ENCODE measurements at regions of chr12 and their contacts with region 1.

Region 1: DNA sequence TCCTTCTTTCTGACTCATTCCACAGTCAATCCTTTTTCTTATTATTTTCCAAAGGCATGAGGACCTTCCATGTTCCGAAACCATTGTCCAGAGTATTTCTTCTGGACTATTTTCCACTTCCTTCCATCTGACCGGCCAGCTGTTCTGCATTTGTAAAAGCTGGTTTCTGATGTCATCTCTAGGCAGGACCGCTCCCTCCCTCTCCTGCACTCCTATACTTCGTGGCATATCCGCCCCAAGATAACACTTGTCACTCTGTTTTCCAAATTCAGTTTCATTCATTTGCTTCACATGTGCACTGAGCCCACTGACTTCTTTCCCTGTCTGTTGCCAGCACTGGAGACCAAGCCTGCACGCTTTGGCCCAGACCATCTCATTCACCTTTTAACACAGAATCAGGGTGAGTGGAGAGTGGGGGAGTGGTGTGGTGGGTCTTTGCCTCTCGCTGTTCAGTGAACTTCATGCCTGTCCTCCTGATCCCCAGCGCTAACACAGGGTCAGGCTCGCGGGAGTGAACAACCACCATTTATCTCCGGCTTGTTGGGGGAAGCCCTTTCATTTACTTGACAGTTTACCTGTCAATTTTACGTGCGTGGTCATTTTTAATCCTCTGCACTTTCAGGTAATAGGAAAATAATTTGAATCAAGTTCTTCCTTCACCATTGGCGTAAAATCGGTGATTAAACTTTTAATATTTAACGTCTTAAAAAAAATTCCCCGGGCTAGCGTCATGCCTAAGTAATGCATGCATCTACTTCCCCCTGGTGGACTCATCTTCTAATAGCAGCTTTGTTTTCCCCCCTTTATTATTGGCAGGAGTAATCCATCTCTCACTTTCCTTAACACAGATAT is 52.5 kb downstream of the C12orf75 start:
- DNase-seq: no peak
- H3K4me3 ChIP-seq: peak overlapping the region; percentile 7 to 46 (median 16)
- H3K27ac ChIP-seq: no peak overlapping the region
- H3K4me1 ChIP-seq: no peaks in the 10 kb centered on the region
- H3K27me3 ChIP-seq: no peaks in the 10 kb centered on the region
- CTCF ChIP-seq: peak; percentile 56 to 91 (median 89)
- POLR2A ChIP-seq: no peak

Region 2: GRCh38 chr12:104381731-104382480 is 1001.1 kb before region 1 on chr12:
- intact Hi-C with region 1: loop called (anchors 10 kb)
- DNase-seq: peak; percentile 55 to 78
- H3K4me3 ChIP-seq: peak overlapping the region in 1 of 3 donors; percentile 23
- H3K27ac ChIP-seq: no peak overlapping the region
- H3K4me1 ChIP-seq: no peaks in the 10 kb centered on the region
- H3K27me3 ChIP-seq: no peaks in the 10 kb centered on the region
- CTCF ChIP-seq: peak; percentile 85 to 96 (median 90)
- POLR2A ChIP-seq: no peak

Region 3: DNA sequence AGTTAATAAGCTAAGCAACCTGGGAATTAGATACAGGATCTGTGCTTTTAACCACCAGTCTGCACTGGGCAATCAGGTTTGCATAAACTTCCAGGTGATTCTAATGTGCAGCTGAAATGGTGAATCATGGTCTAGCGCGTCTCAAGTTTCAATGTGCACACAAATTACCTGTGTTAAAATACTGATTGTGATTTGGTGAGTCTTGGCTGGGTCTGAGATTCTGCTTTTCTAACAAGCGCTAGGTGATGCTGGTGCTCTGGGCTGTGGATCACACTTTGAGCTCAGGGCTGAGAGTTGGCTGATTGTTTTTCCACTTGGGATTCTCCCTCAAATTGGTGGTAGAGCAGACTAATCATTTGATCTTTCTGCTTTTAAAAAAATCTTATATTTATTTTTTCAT is 72.3 kb after region 1 on chr12:
- intact Hi-C with region 1: no loop called
- DNase-seq: no peak
- H3K4me3 ChIP-seq: no peak overlapping the region
- H3K27ac ChIP-seq: no peak overlapping the region
- H3K4me1 ChIP-seq: no peaks in the 10 kb centered on the region
- H3K27me3 ChIP-seq: no peaks in the 10 kb centered on the region
- CTCF ChIP-seq: no peak
- POLR2A ChIP-seq: no peak

Region 4: GRCh38 chr12:105469701-105470100 is 86.7 kb after region 1 on chr12:
- intact Hi-C with region 1: no loop called
- DNase-seq: no peak
- H3K4me3 ChIP-seq: no peak overlapping the region
- H3K27ac ChIP-seq: no peak overlapping the region
- H3K4me1 ChIP-seq: no peaks in the 10 kb centered on the region
- H3K27me3 ChIP-seq: no peaks in the 10 kb centered on the region
- CTCF ChIP-seq: no peak
- POLR2A ChIP-seq: no peak

Measured in breast epithelium (tissue), 4 donors.